ENCODE measurements at regions of chr16 and their contacts with region 1.

Region 1: DNA sequence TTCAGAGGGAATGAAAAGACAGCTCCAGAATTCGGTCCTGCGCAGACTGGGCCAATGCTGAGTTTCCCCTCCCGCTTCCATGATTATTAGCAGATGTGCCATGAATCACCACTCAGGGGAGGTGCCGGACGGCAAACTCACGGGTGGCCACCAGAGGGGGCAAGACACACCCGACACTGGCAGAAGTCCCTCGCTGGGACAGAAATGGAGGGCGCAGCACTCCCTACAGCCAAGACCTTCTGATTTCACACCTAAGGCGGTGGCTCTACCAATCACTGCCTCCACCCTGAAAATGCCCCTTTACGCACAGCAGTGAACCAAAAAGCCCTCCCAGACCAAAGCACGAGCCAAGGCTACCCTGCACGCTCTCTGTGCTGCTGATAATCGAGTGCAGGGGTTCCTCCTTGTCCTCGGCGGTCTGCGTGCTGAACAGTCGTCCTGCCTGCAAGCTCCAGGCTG is 26.8 kb downstream of the TRAP1 start:
- DNase-seq: peak; percentile 89
- H3K4me3 Mint-ChIP-seq: no peak overlapping the region
- H3K27ac Mint-ChIP-seq: no peak overlapping the region
- H3K4me1 Mint-ChIP-seq: peaks cover 13% of the 10 kb centered on the region
- H3K27me3 Mint-ChIP-seq: no peaks in the 10 kb centered on the region

Region 2: GRCh38 chr16:3716831-3717234 is 26.3 kb after region 1 on chr16:
- CTCF ChIA-PET with region 1: interaction called, 10 read pairs
- DNase-seq: peak; percentile 55
- H3K4me3 Mint-ChIP-seq: peak overlapping the region; percentile 92
- H3K27ac Mint-ChIP-seq: peak overlapping the region; percentile 92
- H3K4me1 Mint-ChIP-seq: peaks cover 41% of the 10 kb centered on the region
- H3K27me3 Mint-ChIP-seq: no peaks in the 10 kb centered on the region

Region 3: GRCh38 chr16:5045499-5046115 is 1355.1 kb after region 1 on chr16:
- CTCF ChIA-PET with region 1: no interaction called
- DNase-seq: no peak
- H3K4me3 Mint-ChIP-seq: no peak overlapping the region
- H3K27ac Mint-ChIP-seq: no peak overlapping the region
- H3K4me1 Mint-ChIP-seq: no peaks in the 10 kb centered on the region
- H3K27me3 Mint-ChIP-seq: peaks cover 5% of the 10 kb centered on the region